H1 (cell line): ENCODE measurements at regions of chr14 and their contacts with region 1.

Region 1: DNA sequence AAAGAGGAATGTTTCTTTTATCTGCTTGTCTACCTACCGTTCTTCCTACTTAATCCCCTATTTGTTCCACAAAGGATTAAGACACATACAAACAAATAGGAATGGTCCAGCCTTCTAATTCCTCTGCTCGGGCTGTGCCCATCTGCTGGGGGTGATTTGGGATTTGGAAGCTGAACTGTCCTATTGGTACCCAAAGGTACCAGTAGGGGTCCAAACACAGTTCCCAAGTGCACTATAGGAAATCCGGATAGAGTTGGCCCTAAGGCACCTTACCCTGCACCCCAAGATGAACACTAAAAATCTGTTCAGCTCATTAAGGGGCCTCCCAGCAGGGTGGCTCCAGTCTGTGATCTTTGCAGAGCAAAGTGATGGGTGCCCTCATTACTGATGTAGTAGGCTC is 566.9 kb downstream of the NRXN3 start:
- DNase-seq: no peak
- H3K4me3 ChIP-seq: no peak overlapping the region
- H3K27ac ChIP-seq: no peak overlapping the region
- H3K4me1 ChIP-seq: peaks cover 0 to 7% (median 2%) of the 10 kb centered on the region in 4 experiments; a peak in 4 of 7 replicates
- H3K27me3 ChIP-seq: no peaks in the 10 kb centered on the region
- CTCF ChIP-seq: peak in 1 of 3 experiments; percentile 20; a peak in 2 of 4 replicates
- EP300 ChIP-seq: no peak
- POLR2A ChIP-seq: no peak
- RAD21 ChIP-seq: no peak

Region 2: GRCh38 chr14:78725086-78725485 is 12.0 kb before region 1 on chr14:
- CTCF ChIA-PET with region 1: interaction called, 11 read pairs
- POLR2A ChIA-PET with region 1: no interaction called
- DNase-seq: no peak
- H3K4me3 ChIP-seq: 0 out of 8 replicates have a peak overlapping the region, but pooled peaks of 1 of the 4 experiments have one; percentile 1
- H3K27ac ChIP-seq: no peak overlapping the region
- H3K4me1 ChIP-seq: peaks cover 0 to 6% (median 3%) of the 10 kb centered on the region in 4 experiments; a peak in 4 of 7 replicates
- H3K27me3 ChIP-seq: no peaks in the 10 kb centered on the region
- CTCF ChIP-seq: no peak
- EP300 ChIP-seq: no peak
- POLR2A ChIP-seq: no peak
- RAD21 ChIP-seq: no peak